HEK293 (cell line): ENCODE measurements at regions of chr6 and their contacts with region 1.

Region 1: GRCh38 chr6:133923938-133924593 is 29.0 kb upstream of the TBPL1 start:
- H3K4me3 ChIP-seq: no peak overlapping the region
- H3K27ac ChIP-seq: no peak overlapping the region
- H3K4me1 ChIP-seq: no peaks in the 10 kb centered on the region
- CTCF ChIP-seq: peak; percentile 86

Region 2: GRCh38 chr6:133568970-133569889 is 354.8 kb before region 1 on chr6:
- CTCF ChIA-PET with region 1: interaction called, 349 read pairs
- POLR2A ChIA-PET with region 1: no interaction called
- H3K4me3 ChIP-seq: peak overlapping the region; percentile 49
- H3K27ac ChIP-seq: no peak overlapping the region; the same call in 1 of the 2 replicates
- H3K4me1 ChIP-seq: no peaks in the 10 kb centered on the region
- CTCF ChIP-seq: peak; percentile 79

Region 3: GRCh38 chr6:133895573-133896343 is 28.3 kb before region 1 on chr6:
- CTCF ChIA-PET with region 1: interaction called, 16 read pairs
- POLR2A ChIA-PET with region 1: no interaction called
- H3K4me3 ChIP-seq: peak overlapping the region; percentile 15
- H3K27ac ChIP-seq: no peak overlapping the region
- H3K4me1 ChIP-seq: peaks cover 12% of the 10 kb centered on the region
- CTCF ChIP-seq: no peak

Region 4: GRCh38 chr6:133952815-133953633 is 29.0 kb after region 1 on chr6 and contains the start of gene TBPL1:
- CTCF ChIA-PET with region 1: interaction called, 55 read pairs
- POLR2A ChIA-PET with region 1: no interaction called
- H3K4me3 ChIP-seq: peak within 1 kb of the TSS; percentile 98
- H3K27ac ChIP-seq: peak within 1 kb of the TSS; percentile 70
- H3K4me1 ChIP-seq: peaks cover 18% of the 10 kb centered on the region
- CTCF ChIP-seq: no peak

Region 5: DNA sequence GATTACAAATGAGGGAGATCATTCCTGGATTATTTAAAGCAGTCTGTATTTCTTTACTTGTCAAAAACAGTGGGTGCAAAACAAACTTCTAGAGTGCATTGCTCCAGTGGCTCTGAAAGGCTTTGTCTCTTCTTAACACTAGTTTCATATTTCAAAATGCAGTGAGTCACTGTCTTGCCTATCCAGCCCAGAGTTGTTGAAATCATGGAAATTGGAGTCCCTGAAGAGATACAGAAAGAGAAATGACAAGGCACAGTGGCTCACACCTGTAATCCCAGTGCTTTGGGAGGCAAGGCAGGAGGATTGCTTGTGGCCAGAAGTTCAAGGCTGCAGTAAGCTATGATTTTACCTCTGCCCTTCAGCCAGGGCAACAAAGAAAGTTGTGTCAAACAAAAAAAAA is 117.0 kb after region 1 on chr6:
- CTCF ChIA-PET with region 1: interaction called, 10 read pairs
- POLR2A ChIA-PET with region 1: no interaction called
- H3K4me3 ChIP-seq: no peak overlapping the region
- H3K27ac ChIP-seq: no peak overlapping the region
- H3K4me1 ChIP-seq: peaks cover 3% of the 10 kb centered on the region; the same call in 1 of the 2 replicates
- CTCF ChIP-seq: no peak

Region 6: DNA sequence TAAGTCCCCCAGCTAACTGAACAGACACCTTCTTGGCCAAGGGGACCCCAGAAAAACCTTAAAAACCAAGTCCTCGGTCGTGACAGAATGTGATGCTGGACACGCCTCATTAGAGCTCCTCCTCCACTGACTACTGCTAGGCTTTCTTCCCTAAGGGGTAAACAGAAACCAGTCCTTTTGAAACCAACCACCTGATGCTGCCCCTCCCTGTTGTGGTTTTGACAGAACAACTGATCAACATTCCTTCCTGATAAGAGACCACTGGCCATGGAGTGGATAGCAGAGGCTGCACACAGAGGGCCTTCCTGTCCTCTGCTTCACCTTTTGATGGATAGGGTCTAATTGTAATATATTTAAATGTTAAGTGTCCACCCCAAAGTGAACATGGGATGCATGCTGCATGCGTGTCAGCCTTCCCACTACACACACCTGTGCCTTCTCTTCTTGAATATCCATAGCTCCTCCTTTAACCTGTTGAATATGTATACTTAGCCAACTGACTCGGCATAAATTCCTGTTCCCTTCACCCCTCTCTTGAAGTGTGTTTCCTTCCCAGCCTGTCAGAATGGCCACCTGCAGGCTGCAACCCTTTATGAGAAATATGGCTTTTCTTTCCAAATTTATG is 156.2 kb after region 1 on chr6:
- CTCF ChIA-PET with region 1: interaction called, 40 read pairs
- POLR2A ChIA-PET with region 1: no interaction called
- H3K4me3 ChIP-seq: no peak overlapping the region
- H3K27ac ChIP-seq: no peak overlapping the region
- H3K4me1 ChIP-seq: peaks cover 11% of the 10 kb centered on the region; the same call in 1 of the 2 replicates
- CTCF ChIP-seq: no peak

Region 7: GRCh38 chr6:134161036-134161435 is 237.0 kb after region 1 on chr6:
- CTCF ChIA-PET with region 1: interaction called, 13 read pairs
- POLR2A ChIA-PET with region 1: no interaction called
- H3K4me3 ChIP-seq: no peak overlapping the region
- H3K27ac ChIP-seq: no peak overlapping the region
- H3K4me1 ChIP-seq: no peaks in the 10 kb centered on the region
- CTCF ChIP-seq: no peak